Aorta (tissue), 5 donors: ENCODE measurements at regions of chr17 and their contacts with region 1.

Region 1: DNA sequence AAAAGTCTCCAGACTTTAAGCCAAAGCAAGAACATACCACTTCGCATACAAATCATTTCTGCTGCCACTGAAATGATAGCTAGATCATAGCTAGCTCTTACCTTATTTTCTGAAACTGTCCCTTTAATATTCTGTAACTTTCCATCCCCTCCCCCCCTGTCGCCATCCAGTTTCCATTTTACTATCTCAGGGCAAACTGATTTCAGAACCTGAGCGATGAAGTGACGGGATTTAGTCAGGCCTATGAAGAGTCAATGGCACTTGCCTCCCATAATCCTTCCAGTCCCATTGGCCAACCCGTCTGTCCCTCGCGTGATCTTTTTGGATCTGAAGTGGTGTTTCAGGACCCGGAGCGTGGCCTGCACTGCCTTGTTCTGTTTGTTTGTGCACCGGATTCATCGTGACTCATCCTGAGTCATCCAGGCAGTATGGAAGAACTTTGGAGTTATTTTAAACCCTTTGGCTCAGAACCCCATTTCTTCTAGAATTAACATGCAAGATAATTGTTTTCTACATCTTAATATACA is 199.8 kb upstream of the CHMP6 start:
- DNase-seq: peak; percentile 79 to 87
- ATAC-seq: peak; percentile 78
- H3K4me3 ChIP-seq: no peak overlapping the region
- H3K27ac ChIP-seq: no peak overlapping the region
- H3K4me1 ChIP-seq: no peaks in the 10 kb centered on the region
- H3K27me3 ChIP-seq: no peaks in the 10 kb centered on the region

Region 2: DNA sequence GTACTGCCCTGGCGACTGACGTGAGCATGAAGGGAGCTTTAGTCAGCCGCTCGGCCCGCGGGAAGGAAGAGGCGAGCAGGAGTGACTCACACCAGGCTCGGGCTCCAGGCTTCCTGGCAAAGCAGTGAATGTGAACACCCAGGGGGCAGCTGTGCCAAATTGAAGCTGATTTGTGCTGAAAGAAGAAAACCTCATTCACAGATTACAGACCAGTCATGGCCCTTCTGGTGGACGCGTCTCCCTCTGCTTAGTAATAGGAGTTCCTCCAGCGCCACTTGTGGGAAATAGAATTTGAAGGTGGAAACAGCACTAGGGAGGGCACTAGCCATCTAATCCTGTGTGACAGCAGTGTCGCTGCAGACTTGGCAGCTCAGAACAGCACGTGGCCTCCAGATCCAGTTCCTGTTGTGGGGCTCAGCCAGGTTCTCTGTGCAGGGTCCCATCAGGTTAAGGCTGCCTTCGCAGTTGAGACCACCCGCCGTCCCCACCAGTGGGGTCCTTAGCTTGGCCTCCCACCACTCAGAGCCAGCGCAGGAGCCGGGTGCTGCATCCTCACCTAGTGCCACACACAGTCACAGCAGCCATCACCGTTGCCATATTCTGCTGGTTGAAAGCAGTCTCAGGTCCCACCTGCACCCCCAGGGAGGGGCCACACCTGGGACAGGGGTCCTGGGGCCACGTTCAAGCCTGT is 35.3 kb after region 1 on chr17:
- intact Hi-C with region 1: loop called in 1 of 2 experiments (anchors 5 kb)
- DNase-seq: peak; percentile 92 to 95
- ATAC-seq: peak; percentile 88
- H3K4me3 ChIP-seq: no peak overlapping the region
- H3K27ac ChIP-seq: no peak overlapping the region
- H3K4me1 ChIP-seq: no peaks in the 10 kb centered on the region
- H3K27me3 ChIP-seq: no peaks in the 10 kb centered on the region